Mammary epithelial cell (primary cell): ENCODE measurements at regions of chr4 and their contacts with region 1.

Region 1: GRCh38 chr4:176277162-176277904 is 8.3 kb upstream of the ASB5 start:
- DNase-seq: peak; percentile 53
- H3K4me3 ChIP-seq: no peak overlapping the region
- H3K27ac ChIP-seq: no peak overlapping the region
- H3K4me1 ChIP-seq: peaks cover 15% of the 10 kb centered on the region
- H3K27me3 ChIP-seq: no peaks in the 10 kb centered on the region
- CTCF ChIP-seq: peak; percentile 52 to 72

Region 2: GRCh38 chr4:176034499-176034898 is 242.8 kb before region 1 on chr4:
- CTCF ChIA-PET with region 1: no interaction called
- dilution Hi-C with region 1: no loop called
- in situ Hi-C with region 1: no loop called
- intact Hi-C with region 1: loop called (anchors 1 kb)
- DNase-seq: peak; percentile 4
- H3K4me3 ChIP-seq: no peak overlapping the region
- H3K27ac ChIP-seq: no peak overlapping the region
- H3K4me1 ChIP-seq: no peaks in the 10 kb centered on the region
- H3K27me3 ChIP-seq: no peaks in the 10 kb centered on the region
- CTCF ChIP-seq: peak in 1 of 2 donors; percentile 42

Region 3: GRCh38 chr4:176065435-176066291 is 211.7 kb before region 1 on chr4 and contains the start of gene WDR17:
- CTCF ChIA-PET with region 1: no interaction called
- dilution Hi-C with region 1: no loop called
- in situ Hi-C with region 1: no loop called
- intact Hi-C with region 1: no loop called
- DNase-seq: peak; percentile 33
- H3K4me3 ChIP-seq: peak within 1 kb of the TSS; percentile 39 to 64 (median 56)
- H3K27ac ChIP-seq: no peak within 1 kb of the TSS
- H3K4me1 ChIP-seq: peaks cover 5% of the 10 kb centered on the region
- H3K27me3 ChIP-seq: no peaks in the 10 kb centered on the region
- CTCF ChIP-seq: no peak
- total RNA-seq, gene WDR17: 0.33 to 0.42 TPM

Region 4: GRCh38 chr4:176150356-176150682 is 127.0 kb before region 1 on chr4:
- CTCF ChIA-PET with region 1: interaction called, 6 read pairs
- dilution Hi-C with region 1: no loop called
- in situ Hi-C with region 1: no loop called
- intact Hi-C with region 1: loop called (anchors 1 kb)
- DNase-seq: peak; percentile 11
- H3K4me3 ChIP-seq: no peak overlapping the region
- H3K27ac ChIP-seq: no peak overlapping the region
- H3K4me1 ChIP-seq: no peaks in the 10 kb centered on the region
- H3K27me3 ChIP-seq: no peaks in the 10 kb centered on the region
- CTCF ChIP-seq: peak in 1 of 2 donors; percentile 52

Region 5: DNA sequence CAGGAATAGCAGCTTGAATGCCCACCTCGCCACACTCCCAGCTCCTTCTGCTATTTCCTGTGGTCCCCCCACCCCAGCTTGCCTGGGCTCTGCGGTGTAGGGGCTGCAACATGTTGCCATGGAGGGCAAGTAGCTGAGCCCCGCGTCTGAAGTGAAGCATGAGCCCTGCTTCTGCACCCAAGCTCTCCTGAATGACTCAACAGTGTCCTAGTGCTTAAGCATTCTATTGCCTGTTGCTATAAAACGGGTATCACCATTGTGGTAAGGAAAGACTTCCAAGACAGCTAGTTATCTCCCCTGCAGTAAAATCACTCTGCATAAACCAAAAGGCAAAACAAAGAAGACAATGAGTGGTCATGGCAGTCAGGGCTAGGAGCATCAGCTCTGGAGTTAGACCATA is 50.6 kb before region 1 on chr4:
- CTCF ChIA-PET with region 1: no interaction called
- dilution Hi-C with region 1: no loop called
- in situ Hi-C with region 1: no loop called
- intact Hi-C with region 1: loop called (anchors 5 kb)
- DNase-seq: no peak
- H3K4me3 ChIP-seq: no peak overlapping the region
- H3K27ac ChIP-seq: no peak overlapping the region
- H3K4me1 ChIP-seq: no peaks in the 10 kb centered on the region
- H3K27me3 ChIP-seq: no peaks in the 10 kb centered on the region
- CTCF ChIP-seq: no peak